ENCODE measurements at regions of chr7 and their contacts with region 1.

Region 1: GRCh38 chr7:7681179-7681935 is 37.0 kb downstream of the RPA3 start:
- DNase-seq: peak; percentile 66
- H3K4me3 Mint-ChIP-seq: no peak overlapping the region
- H3K27ac Mint-ChIP-seq: no peak overlapping the region
- H3K4me1 Mint-ChIP-seq: peaks cover 22% of the 10 kb centered on the region
- H3K27me3 Mint-ChIP-seq: no peaks in the 10 kb centered on the region
- CTCF ChIP-seq: peak; percentile 58

Region 2: GRCh38 chr7:7175075-7175675 is 506.2 kb before region 1 on chr7:
- CTCF ChIA-PET with region 1: no interaction called
- intact Hi-C with region 1: no loop called
- DNase-seq: no peak
- H3K4me3 Mint-ChIP-seq: no peak overlapping the region
- H3K27ac Mint-ChIP-seq: no peak overlapping the region
- H3K4me1 Mint-ChIP-seq: peaks cover 36% of the 10 kb centered on the region
- H3K27me3 Mint-ChIP-seq: no peaks in the 10 kb centered on the region
- CTCF ChIP-seq: no peak

Region 3: DNA sequence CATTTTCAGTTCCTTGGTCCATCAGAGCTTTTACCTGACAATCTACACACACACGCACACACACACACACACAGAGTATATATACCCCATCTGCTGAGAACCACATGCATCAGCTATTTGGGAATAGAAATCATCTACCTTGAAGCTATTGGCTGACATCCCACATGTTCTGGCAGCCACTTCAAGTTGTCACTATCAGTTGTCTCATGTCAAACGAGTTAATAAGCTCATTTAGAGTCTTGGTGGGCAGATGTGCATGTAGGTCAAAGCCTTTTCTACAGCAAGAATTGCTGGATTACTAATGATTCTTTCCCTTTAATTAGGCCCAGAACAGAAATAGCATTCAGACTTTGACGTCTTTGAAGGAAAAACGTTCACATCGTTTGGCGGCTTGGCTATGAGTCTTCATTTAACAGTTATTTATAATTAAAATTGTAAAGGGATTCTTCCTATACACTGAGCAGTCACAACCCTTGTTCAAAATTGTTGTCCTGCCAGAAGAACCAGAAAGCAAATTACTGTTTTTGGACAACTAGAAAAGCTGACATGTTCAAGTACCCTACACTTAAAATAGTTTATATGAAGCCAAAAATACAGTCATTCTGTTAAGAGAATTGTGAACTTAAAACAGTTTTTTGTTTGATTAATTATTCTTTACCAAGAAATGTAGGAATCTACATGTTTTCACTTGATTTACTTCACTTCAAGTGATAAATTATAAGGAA is 182.3 kb before region 1 on chr7:
- CTCF ChIA-PET with region 1: no interaction called
- intact Hi-C with region 1: no loop called
- DNase-seq: no peak
- H3K4me3 Mint-ChIP-seq: no peak overlapping the region
- H3K27ac Mint-ChIP-seq: no peak overlapping the region
- H3K4me1 Mint-ChIP-seq: no peaks in the 10 kb centered on the region
- H3K27me3 Mint-ChIP-seq: no peaks in the 10 kb centered on the region
- CTCF ChIP-seq: no peak

Region 4: GRCh38 chr7:7696458-7697119 is 15.2 kb after region 1 on chr7:
- CTCF ChIA-PET with region 1: interaction called, 19 read pairs
- intact Hi-C with region 1: no loop called
- DNase-seq: peak; percentile 27
- H3K4me3 Mint-ChIP-seq: peak overlapping the region; percentile 36
- H3K27ac Mint-ChIP-seq: peak overlapping the region; percentile 76
- H3K4me1 Mint-ChIP-seq: peaks cover 48% of the 10 kb centered on the region
- H3K27me3 Mint-ChIP-seq: no peaks in the 10 kb centered on the region
- CTCF ChIP-seq: no peak

Region 5: GRCh38 chr7:7889791-7890568 is 208.6 kb after region 1 on chr7:
- CTCF ChIA-PET with region 1: no interaction called
- intact Hi-C with region 1: loop called (anchors 5 kb)
- DNase-seq: no peak
- H3K4me3 Mint-ChIP-seq: no peak overlapping the region
- H3K27ac Mint-ChIP-seq: no peak overlapping the region
- H3K4me1 Mint-ChIP-seq: no peaks in the 10 kb centered on the region
- H3K27me3 Mint-ChIP-seq: no peaks in the 10 kb centered on the region
- CTCF ChIP-seq: no peak

Region 6: GRCh38 chr7:8035647-8036518 is 354.5 kb after region 1 on chr7:
- CTCF ChIA-PET with region 1: interaction called, 14 read pairs
- intact Hi-C with region 1: loop called (anchors 1 kb)
- DNase-seq: no peak
- H3K4me3 Mint-ChIP-seq: no peak overlapping the region
- H3K27ac Mint-ChIP-seq: no peak overlapping the region
- H3K4me1 Mint-ChIP-seq: peaks cover 16% of the 10 kb centered on the region
- H3K27me3 Mint-ChIP-seq: no peaks in the 10 kb centered on the region
- CTCF ChIP-seq: peak; percentile 68

Region 7: DNA sequence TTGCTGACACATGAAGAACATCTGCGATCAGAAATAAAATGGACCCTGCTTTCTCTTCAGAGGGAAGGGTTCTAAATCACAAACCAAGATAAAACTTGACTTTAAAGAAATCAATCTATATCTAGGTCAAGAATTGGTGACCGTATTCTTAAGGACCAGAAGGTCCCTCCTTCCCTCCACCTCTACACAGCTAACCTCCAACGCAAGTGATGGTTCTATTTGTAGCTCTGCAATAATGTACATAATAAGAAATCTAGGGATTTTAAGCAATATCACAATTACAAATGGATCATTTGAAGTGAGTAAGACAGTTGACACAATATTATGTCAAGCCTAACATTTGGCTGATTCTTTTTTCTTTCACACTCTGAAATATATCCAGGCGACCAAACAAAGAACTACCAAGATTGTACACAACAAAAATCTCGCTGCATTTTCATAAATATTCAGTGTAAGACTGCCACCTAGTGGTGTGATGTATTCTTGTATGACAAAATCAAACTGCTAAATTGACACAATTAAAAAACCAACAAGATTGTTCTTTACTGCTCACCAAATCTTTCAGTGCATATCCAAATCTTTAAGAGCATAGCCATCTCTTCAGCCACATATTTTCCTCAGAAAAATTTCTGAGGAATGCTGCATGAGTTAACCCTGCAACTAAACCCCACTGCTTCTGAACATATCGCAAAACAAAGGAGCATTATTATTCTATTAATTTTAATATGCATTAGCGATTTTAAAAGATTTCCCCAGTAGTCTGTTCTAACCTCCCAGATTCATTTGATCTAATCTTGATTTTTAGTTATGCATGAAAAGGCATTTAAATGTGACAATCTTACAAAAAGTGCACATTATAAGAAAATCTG is 536.1 kb after region 1 on chr7:
- CTCF ChIA-PET with region 1: interaction called, 6 read pairs
- intact Hi-C with region 1: loop called (anchors 5 kb)
- DNase-seq: peak; percentile 59
- H3K4me3 Mint-ChIP-seq: no peak overlapping the region
- H3K27ac Mint-ChIP-seq: no peak overlapping the region
- H3K4me1 Mint-ChIP-seq: no peaks in the 10 kb centered on the region
- H3K27me3 Mint-ChIP-seq: no peaks in the 10 kb centered on the region
- CTCF ChIP-seq: peak; percentile 66